ENCODE measurements at regions of chr7 and their contacts with region 1.

Region 1: DNA sequence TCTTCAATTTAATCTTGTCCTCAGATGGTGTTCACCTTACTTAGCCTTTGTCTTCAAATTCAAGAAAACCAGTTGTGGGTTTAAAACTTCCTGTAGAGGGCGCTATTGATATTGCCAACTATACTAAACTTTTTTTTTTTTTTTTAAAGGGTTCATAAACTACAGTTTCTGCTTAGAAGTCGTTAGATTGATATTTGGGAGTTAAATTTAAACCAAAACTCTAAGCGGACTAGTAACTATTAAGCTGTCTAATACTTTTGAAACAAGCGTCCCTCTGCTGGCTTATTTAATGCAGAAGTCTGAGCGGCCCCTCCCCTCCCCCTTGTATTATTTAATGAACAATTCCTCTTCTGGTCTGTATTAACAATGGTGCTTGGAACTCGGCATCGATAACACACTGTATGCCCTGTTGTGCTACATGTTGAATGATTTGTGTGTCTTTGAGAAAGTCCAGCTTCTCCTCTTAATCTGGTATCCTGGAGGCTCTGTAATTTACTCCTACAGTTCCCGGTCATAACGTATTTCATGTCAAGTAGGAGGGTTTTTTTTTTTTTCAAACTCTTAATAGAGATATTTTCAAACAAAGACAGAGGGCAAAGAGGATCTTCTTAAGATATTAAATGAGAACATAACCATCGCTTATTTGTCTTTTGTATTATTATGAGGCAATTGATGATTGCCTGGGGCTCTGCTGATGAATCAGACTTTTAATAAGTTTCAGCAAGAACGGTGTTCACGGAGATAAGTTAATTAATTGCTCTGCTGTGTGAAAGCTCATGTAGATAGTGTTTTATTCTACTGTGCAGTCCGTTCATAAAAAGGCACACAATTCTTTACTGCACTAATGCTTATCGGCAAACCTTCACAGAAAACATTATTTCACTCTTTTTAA is 22.6 kb upstream of the CREB5 start:
- DNase-seq: peak in 5 of 9 donors; percentile 12 to 53 (median 21)
- ATAC-seq: peak; percentile 40
- H3K4me3 ChIP-seq: no peak overlapping the region
- H3K4me3 Mint-ChIP-seq: no peak overlapping the region
- H3K27ac ChIP-seq: no peak overlapping the region
- H3K27ac Mint-ChIP-seq: no peak overlapping the region
- H3K4me1 ChIP-seq: no peaks in the 10 kb centered on the region
- H3K4me1 Mint-ChIP-seq: peaks cover 0 to 6% (median 3%) of the 10 kb centered on the region in 7 donors
- H3K27me3 ChIP-seq: no peaks in the 10 kb centered on the region
- H3K27me3 Mint-ChIP-seq: peaks cover 15 to 42% (median 41%) of the 10 kb centered on the region in 5 donors

Region 2: DNA sequence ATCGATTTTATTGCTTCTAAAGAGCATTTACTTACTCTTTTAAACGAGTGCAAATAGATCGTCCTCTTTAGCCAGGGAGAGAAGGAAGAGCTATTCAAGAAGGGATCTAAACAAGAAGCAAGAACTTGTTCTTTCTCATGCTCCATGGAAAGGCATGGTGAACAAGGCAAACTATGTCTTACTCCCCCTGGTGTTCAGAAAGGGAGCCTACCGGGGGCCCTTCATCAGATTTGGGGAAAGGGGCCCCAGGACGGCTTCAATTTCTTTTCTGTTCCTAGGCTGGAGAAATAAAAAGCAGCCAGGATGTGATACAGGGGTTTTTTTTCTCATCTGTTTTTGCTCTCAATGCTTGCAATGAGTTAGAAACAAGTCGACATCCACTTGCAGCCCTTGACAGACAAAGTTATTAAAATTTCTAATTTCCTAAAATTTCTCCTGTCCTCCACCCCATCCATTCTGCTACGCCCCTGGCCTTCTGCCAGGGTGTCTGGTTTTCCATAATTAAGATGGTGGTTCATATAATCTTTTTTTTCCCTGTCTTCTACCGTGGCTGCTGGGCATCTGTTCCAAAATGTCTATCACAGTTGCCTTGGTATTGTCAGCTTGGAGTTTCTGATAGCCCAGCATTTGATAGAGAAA is 237.0 kb after region 1 on chr7:
- CTCF ChIA-PET with region 1: no interaction called
- POLR2A ChIA-PET with region 1: no interaction called
- intact Hi-C with region 1: loop called in 1 of 2 experiments (anchors 1 kb)
- DNase-seq: peak in 1 of 9 donors; percentile 14
- ATAC-seq: no peak
- H3K4me3 ChIP-seq: no peak overlapping the region
- H3K4me3 Mint-ChIP-seq: no peak overlapping the region
- H3K27ac ChIP-seq: no peak overlapping the region
- H3K27ac Mint-ChIP-seq: no peak overlapping the region
- H3K4me1 ChIP-seq: no peaks in the 10 kb centered on the region
- H3K4me1 Mint-ChIP-seq: no peaks in the 10 kb centered on the region
- H3K27me3 ChIP-seq: no peaks in the 10 kb centered on the region
- H3K27me3 Mint-ChIP-seq: peaks cover 0 to 29% (median 25%) of the 10 kb centered on the region in 5 donors

Region 3: DNA sequence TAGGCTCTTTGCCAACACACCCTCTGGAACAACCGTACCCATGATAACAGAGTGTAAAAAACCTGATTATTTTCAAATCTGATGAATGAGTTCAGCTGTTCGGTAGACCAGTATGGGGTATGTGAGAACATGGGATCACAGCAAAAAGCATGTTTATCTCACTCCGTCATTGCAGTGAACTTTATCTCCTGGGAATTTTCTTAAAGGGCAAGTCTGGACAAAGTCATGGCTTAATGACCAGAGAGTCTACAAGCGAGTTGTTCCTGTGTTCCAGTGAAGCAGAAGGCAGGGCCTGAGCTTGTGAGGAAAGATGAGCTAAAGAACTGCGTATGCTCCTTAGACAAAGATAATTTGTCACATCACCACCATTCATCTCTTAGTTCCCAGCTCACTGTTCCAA is 348.7 kb after region 1 on chr7:
- CTCF ChIA-PET with region 1: no interaction called
- POLR2A ChIA-PET with region 1: no interaction called
- intact Hi-C with region 1: no loop called
- DNase-seq: no peak
- ATAC-seq: no peak
- H3K4me3 ChIP-seq: no peak overlapping the region
- H3K4me3 Mint-ChIP-seq: no peak overlapping the region
- H3K27ac ChIP-seq: no peak overlapping the region
- H3K27ac Mint-ChIP-seq: no peak overlapping the region
- H3K4me1 ChIP-seq: no peaks in the 10 kb centered on the region
- H3K4me1 Mint-ChIP-seq: no peaks in the 10 kb centered on the region
- H3K27me3 ChIP-seq: no peaks in the 10 kb centered on the region
- H3K27me3 Mint-ChIP-seq: peaks cover 3 to 28% (median 8%) of the 10 kb centered on the region in 5 donors

Region 4: DNA sequence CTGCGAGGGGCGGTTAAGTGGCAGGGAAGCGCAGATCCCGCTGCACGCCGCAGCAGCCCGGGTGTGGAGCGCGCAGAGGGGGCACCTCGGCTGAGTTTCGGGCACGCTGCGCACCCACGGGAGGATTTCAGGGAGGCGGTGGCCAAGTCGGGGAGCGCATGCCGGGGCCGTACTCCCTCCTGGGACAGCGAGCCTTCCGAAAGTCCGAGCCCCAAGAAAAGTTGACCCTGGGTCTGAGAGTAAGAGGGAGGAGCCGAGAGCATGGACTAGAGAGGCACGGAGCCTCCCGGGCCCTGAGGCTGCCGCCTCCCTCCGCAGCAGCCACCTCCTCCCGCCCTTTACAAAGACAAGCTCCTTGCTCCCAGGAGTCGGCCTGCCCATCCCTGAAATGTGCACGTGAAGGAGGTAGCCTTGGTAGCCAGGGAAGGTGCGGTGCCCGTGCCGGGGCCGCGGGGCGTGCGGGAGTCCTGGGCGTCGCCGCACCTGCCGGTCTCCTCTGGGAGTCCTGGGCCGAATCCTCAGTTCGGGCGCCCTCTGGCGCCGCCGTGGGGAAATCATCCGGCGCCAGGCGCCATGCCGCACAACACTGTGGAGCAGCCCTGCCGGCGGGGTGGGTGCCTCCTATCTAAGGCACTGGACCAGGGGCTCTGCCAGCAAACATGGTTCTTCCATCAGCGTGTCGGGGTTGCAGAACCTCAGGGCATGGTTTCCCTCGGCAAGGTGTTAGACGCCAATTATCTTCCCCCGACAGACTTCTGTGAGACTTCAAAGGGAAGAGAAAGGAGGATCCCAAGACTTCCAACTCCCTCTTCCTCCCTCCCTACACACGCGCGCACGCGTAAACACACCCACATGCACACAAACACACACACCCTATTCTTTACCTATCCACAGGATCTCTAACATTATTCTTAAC is 464.3 kb after region 1 on chr7:
- CTCF ChIA-PET with region 1: no interaction called
- POLR2A ChIA-PET with region 1: no interaction called
- intact Hi-C with region 1: loop called (anchors 1 kb)
- DNase-seq: peak; percentile 20 to 77 (median 56)
- ATAC-seq: peak; percentile 92
- H3K4me3 ChIP-seq: no peak overlapping the region
- H3K4me3 Mint-ChIP-seq: peak overlapping the region; percentile 67 to 90 (median 82)
- H3K27ac ChIP-seq: no peak overlapping the region
- H3K27ac Mint-ChIP-seq: peak overlapping the region in 1 of 9 donors; percentile 41
- H3K4me1 ChIP-seq: no peaks in the 10 kb centered on the region
- H3K4me1 Mint-ChIP-seq: peaks cover 6 to 12% (median 11%) of the 10 kb centered on the region in 7 donors
- H3K27me3 ChIP-seq: peaks cover 0 to 11% of the 10 kb centered on the region in 2 donors
- H3K27me3 Mint-ChIP-seq: peaks cover 51 to 71% (median 68%) of the 10 kb centered on the region in 5 donors

Measured in naive thymus-derived CD4-positive, alpha-beta T cell (primary cell).